ENCODE measurements at regions of chr14 and their contacts with region 1.

Region 1: GRCh38 chr14:29788093-29788492 is 139.6 kb downstream of the PRKD1 start:
- DNase-seq: no peak
- ATAC-seq: no peak
- H3K4me3 Mint-ChIP-seq: no peak overlapping the region
- H3K27ac Mint-ChIP-seq: no peak overlapping the region
- H3K4me1 Mint-ChIP-seq: no peaks in the 10 kb centered on the region
- H3K27me3 Mint-ChIP-seq: no peaks in the 10 kb centered on the region
- CTCF ChIP-seq: no peak

Region 2: DNA sequence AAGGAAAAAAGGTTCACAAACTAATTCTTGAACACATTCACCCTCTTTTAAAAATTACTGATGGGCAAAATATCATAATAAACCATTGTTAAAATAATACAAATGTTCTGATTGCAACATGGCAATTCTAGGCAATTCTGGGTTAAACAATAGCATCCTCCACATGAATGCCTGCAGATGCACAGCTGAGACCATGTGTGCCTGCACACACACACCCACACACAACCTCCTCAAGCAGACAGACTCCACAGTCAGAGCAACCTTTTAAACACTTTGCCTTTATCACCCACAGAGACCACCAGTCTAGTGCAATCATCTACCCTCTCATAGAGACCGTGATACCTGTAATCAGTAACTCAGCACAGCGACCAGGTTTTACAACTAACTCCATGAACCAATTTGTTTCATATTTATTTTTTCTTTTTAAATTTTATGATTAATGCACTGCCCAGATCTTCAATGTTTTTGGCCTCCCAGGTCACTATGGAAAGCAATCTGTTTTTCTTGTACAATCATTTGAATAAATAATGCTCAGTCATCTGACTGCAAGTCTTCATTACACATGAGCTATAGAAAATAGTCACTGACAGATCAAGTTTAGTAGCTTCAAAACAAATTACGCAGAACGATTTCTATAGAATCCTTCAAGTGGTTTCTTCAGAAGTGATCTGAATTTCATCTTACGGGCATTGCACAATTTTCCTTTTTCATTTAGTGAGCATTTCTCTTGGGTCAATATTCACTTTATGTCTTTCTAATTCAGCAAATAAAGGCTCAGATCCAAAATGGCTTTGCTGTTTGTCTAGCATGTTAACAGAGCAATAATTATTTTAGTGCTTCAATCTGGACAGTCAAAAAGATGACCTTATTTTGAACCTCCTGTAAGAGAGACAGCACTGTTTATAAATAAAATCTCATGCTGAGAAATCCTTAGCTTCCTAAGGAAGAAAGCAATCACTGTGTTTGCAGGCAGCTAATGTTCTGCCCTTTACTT is 33.9 kb after region 1 on chr14:
- CTCF ChIA-PET with region 1: no interaction called
- POLR2A ChIA-PET with region 1: no interaction called
- intact Hi-C with region 1: loop called (anchors 1 kb)
- DNase-seq: no peak
- ATAC-seq: no peak
- H3K4me3 Mint-ChIP-seq: no peak overlapping the region
- H3K27ac Mint-ChIP-seq: no peak overlapping the region
- H3K4me1 Mint-ChIP-seq: no peaks in the 10 kb centered on the region
- H3K27me3 Mint-ChIP-seq: no peaks in the 10 kb centered on the region
- CTCF ChIP-seq: no peak